CD8-positive, alpha-beta memory T cell (primary cell): ENCODE measurements at regions of chr6 and their contacts with region 1.

Region 1: DNA sequence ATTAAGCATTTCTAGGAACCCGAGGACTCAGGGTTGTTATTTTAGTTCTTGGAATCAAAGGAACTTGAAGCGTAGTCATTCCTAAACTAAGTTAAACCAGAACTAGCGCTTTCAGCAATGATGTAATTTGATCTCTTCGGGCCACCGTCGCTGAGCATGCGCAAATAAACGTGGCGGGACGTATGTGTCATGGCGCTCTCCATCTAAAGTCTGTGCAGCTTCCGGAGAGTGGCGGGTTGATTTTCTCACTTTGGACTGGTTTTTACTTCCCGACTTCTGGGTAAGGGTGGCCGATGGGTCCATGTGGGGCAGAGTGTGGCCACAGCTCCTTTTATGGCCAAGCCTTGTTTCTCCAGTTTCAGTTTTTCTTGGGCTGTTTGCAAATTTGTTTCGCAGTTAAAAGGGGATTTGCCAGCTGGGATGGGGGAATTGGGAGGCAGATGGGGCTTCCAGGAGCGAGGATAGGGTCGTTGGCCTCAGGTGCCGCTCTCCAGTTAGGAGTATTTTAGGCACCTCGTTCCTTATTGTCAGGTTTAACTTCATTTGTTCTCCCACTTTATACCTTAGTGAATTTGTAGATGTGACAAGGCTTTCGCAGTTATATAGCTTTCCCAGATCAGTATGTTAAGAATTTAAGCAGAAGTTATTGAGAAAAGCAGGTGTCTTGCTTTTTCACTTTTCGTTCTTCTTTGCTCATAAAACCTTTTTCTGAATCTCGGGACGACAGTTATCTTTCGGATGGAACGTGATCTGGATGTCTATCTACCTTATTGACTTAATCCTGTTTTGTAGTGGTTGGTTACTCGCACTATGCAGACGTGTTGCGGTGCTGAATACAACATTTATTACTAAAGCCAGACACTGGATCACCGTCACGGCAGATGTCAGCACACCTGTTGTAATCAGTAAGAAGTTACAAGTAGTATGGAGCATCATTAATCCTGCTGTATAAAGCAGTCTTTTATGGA is at the start of gene CDKAL1:
- DNase-seq: peak; percentile 81 to 94 (median 86)
- H3K4me3 ChIP-seq: peak within 1 kb of the TSS; percentile 77
- H3K4me3 Mint-ChIP-seq: peak within 1 kb of the TSS; percentile 95 to 99 (median 98)
- H3K27ac ChIP-seq: peak within 1 kb of the TSS; percentile 78
- H3K27ac Mint-ChIP-seq: peak within 1 kb of the TSS; percentile 95 to 99 (median 97)
- H3K4me1 ChIP-seq: peaks cover 11% of the 10 kb centered on the region
- H3K4me1 Mint-ChIP-seq: peaks cover 34 to 55% (median 42%) of the 10 kb centered on the region in 3 donors
- H3K27me3 ChIP-seq: no peaks in the 10 kb centered on the region
- H3K27me3 Mint-ChIP-seq: peaks cover 0 to 3% of the 10 kb centered on the region in 2 donors
- total RNA-seq, gene CDKAL1: 29.6 to 30.2 TPM

Region 2: GRCh38 chr6:20291764-20292580 is 242.6 kb before region 1 on chr6:
- CTCF ChIA-PET with region 1: interaction called, 13 read pairs
- POLR2A ChIA-PET with region 1: interaction called, 8 read pairs
- DNase-seq: peak; percentile 56 to 79 (median 59)
- H3K4me3 ChIP-seq: no peak overlapping the region
- H3K4me3 Mint-ChIP-seq: peak overlapping the region in 6 of 7 donors; percentile 29 to 79 (median 58)
- H3K27ac ChIP-seq: no peak overlapping the region
- H3K27ac Mint-ChIP-seq: peak overlapping the region in 5 of 8 donors; percentile 8 to 71 (median 44)
- H3K4me1 ChIP-seq: peaks cover 18% of the 10 kb centered on the region
- H3K4me1 Mint-ChIP-seq: peaks cover 28 to 38% (median 35%) of the 10 kb centered on the region in 3 donors
- H3K27me3 ChIP-seq: no peaks in the 10 kb centered on the region
- H3K27me3 Mint-ChIP-seq: no peaks in the 10 kb centered on the region

Region 3: DNA sequence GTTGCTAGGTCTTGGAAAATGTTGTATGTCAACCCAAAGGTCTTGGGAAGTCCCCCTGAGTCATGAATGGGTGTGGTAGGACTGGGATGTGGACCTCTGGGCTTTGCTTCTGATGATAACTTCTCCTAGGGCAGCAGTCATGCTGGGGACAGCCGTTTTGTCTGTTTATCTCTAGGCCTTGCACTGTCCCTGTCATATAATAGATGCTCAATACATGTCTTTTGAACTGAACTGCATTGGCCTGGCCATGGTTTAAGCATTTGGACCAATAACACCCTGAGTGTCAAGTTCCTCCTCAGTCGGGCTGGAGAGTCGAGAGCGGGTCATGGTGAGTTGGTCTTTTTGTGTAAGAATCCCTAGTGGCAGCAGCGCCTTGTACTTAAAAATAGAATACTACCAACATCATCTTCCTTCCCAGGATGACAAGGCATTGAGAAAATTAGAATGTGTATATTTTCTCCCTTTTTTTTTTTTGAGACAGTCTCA is 89.8 kb before region 1 on chr6:
- CTCF ChIA-PET with region 1: no interaction called
- POLR2A ChIA-PET with region 1: no interaction called
- DNase-seq: no peak
- H3K4me3 ChIP-seq: no peak overlapping the region
- H3K4me3 Mint-ChIP-seq: no peak overlapping the region
- H3K27ac ChIP-seq: no peak overlapping the region
- H3K27ac Mint-ChIP-seq: peak overlapping the region in 4 of 8 donors; percentile 4 to 76 (median 44)
- H3K4me1 ChIP-seq: peaks cover 8% of the 10 kb centered on the region
- H3K4me1 Mint-ChIP-seq: peaks cover 48 to 79% (median 77%) of the 10 kb centered on the region in 3 donors
- H3K27me3 ChIP-seq: no peaks in the 10 kb centered on the region
- H3K27me3 Mint-ChIP-seq: no peaks in the 10 kb centered on the region

Region 4: DNA sequence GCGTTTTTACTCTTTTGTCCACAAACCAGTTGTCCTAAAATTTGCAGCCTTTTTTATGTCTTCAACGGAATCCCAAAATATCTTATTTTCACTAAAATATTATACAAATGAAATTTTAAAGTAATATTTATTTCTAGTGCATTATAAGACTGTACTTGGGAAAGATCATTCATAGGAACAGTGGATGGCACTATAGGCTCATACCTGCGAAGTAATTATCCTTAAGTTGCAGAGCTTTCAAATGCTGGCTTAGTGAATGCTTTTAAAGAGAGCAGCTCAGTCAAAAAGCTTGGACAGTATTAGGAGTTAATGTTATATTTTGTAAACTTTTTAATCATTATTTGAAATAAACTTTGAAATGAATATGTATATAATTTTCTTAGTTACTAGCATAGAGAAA is 254.6 kb after region 1 on chr6:
- CTCF ChIA-PET with region 1: no interaction called
- POLR2A ChIA-PET with region 1: no interaction called
- DNase-seq: no peak
- H3K4me3 ChIP-seq: no peak overlapping the region
- H3K4me3 Mint-ChIP-seq: no peak overlapping the region
- H3K27ac ChIP-seq: no peak overlapping the region
- H3K27ac Mint-ChIP-seq: no peak overlapping the region
- H3K4me1 ChIP-seq: no peaks in the 10 kb centered on the region
- H3K4me1 Mint-ChIP-seq: peaks cover 0 to 4% (median 0%) of the 10 kb centered on the region in 3 donors
- H3K27me3 ChIP-seq: no peaks in the 10 kb centered on the region
- H3K27me3 Mint-ChIP-seq: no peaks in the 10 kb centered on the region